Testis (tissue), 5 donors: ENCODE measurements at regions of chr15 and their contacts with region 1.

Region 1: GRCh38 chr15:74781431-74782258 is at the start of gene CSK:
- DNase-seq: peak; percentile 68
- H3K4me3 ChIP-seq: peak within 1 kb of the TSS; percentile 85 to 93
- H3K27ac ChIP-seq: peak within 1 kb of the TSS; percentile 55 to 88
- H3K4me1 ChIP-seq: peaks cover 49% of the 10 kb centered on the region
- H3K27me3 ChIP-seq: no peaks in the 10 kb centered on the region
- CTCF ChIP-seq: peak; percentile 44 to 94 (median 52)
- POLR2A ChIP-seq: no peak
- total RNA-seq, gene CSK: 41.5 to 43.1 TPM

Region 2: GRCh38 chr15:74453925-74454763 is 327.5 kb before region 1 on chr15:
- intact Hi-C with region 1: no loop called
- DNase-seq: no peak
- H3K4me3 ChIP-seq: no peak overlapping the region
- H3K27ac ChIP-seq: no peak overlapping the region
- H3K4me1 ChIP-seq: peaks cover 7% of the 10 kb centered on the region
- H3K27me3 ChIP-seq: no peaks in the 10 kb centered on the region
- CTCF ChIP-seq: no peak
- POLR2A ChIP-seq: no peak

Region 3: GRCh38 chr15:74842581-74843444 is 61.2 kb after region 1 on chr15 and contains the start of gene ULK3:
- intact Hi-C with region 1: loop called (anchors 5 kb)
- DNase-seq: peak; percentile 94
- H3K4me3 ChIP-seq: peak within 1 kb of the TSS; percentile 75 to 84
- H3K27ac ChIP-seq: peak within 1 kb of the TSS; percentile 89
- H3K4me1 ChIP-seq: peaks cover 30% of the 10 kb centered on the region
- H3K27me3 ChIP-seq: no peaks in the 10 kb centered on the region
- CTCF ChIP-seq: peak; percentile 62 to 88 (median 87)
- POLR2A ChIP-seq: no peak
- total RNA-seq, gene ULK3: 68.2 to 78.5 TPM

Region 4: GRCh38 chr15:74857082-74857655 is 75.5 kb after region 1 on chr15:
- intact Hi-C with region 1: no loop called
- DNase-seq: no peak
- H3K4me3 ChIP-seq: no peak overlapping the region
- H3K27ac ChIP-seq: no peak overlapping the region
- H3K4me1 ChIP-seq: peaks cover 3% of the 10 kb centered on the region
- H3K27me3 ChIP-seq: no peaks in the 10 kb centered on the region
- CTCF ChIP-seq: no peak
- POLR2A ChIP-seq: no peak